ENCODE measurements at regions of chr1 and their contacts with region 1.

Region 1: DNA sequence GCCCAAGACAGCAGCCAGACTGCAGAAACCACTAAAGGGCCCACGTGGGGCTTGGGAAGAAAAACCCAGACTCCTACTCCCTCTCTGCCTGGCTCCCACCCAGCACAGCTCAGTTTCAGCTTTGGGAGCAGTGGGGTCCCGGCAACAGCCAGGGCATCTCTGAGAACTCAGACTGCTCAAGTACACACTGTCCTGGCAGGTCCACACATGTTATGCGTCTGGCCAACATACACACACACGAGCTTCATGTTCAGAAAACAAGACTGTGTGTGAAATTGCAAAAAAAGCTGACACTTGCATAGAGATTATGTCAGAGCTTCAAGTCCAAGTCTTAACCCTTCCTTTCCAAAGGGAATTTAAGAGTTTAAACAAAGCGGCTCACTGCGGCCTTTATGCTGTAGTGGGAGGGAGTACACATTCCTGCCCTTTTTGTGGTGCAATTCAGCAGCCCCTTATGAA is 136.6 kb upstream of the CD34 start:
- DNase-seq: peak; percentile 55 to 87
- H3K4me3 ChIP-seq: no peak overlapping the region
- H3K27ac ChIP-seq: peak overlapping the region; percentile 73 to 79
- H3K4me1 ChIP-seq: peaks cover 7 to 22% of the 10 kb centered on the region in 2 donors
- H3K27me3 ChIP-seq: no peaks in the 10 kb centered on the region
- CTCF ChIP-seq: no peak

Region 2: DNA sequence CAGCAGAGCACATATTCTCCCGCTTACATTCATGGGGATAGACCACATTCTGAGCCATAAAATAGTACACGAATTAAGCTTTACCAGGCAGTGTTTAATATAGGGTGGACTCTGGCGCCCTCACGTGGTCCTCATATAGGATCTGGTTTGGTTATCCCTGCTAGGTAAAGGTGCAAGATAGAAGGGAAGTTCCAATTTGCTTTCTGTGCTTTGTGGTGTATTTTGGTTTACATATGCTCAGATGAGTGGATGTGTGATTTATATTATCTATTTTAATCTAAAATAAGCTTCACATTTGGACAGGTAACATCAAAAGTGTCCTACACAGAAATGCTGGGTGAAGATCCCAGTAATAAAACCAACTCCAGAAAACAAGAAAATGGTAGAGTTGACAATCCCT is 547.9 kb before region 1 on chr1:
- intact Hi-C with region 1: no loop called
- DNase-seq: no peak
- H3K4me3 ChIP-seq: no peak overlapping the region
- H3K27ac ChIP-seq: no peak overlapping the region
- H3K4me1 ChIP-seq: no peaks in the 10 kb centered on the region
- H3K27me3 ChIP-seq: no peaks in the 10 kb centered on the region
- CTCF ChIP-seq: peak; percentile 34 to 54 (median 40)

Region 3: DNA sequence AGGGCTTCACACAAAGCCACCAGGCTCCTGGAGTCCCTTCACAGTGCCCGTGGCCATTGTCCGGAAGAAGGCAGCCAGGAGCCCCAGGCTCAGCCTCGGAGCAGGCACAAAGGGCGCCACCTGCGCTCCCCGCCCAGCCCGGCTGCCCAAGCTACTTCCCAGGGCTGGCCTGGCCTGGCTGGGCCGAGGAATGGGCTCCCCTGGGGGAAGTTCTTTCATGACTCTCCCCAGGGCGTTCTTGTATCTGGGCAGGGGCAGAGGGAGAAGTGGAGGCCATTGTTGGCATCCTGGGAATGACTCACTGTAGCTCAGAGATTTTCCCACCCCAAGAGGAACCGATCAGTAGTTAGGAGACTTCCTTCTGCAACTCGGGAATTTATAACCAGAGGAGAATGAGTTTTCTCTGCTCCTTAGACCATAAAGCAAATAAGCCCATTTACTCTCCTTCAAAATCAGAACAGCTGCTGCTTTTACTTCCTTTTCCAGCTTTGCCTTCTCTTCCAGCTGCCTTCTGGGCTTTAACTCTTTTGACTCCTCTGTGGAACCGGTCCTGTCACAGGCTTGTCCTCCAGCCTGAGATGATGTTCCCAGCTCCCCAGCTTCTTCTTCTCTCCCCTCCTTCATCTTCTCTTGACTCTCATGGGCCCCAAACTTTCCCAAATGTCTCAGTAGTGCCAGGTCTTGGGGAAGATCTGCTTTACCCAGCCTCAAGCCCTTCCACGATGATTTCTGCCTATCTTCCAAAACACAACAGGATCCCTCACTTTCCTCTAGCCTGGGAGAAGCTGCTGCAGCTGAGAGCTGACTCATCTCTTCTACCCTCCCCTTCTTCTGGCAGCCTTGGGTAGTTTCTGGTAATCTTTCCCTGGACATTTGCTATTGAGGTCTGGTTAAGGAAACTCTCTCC is 17.9 kb before region 1 on chr1:
- intact Hi-C with region 1: loop called (anchors 2 kb)
- DNase-seq: peak in 1 of 2 donors; percentile 80
- H3K4me3 ChIP-seq: no peak overlapping the region
- H3K27ac ChIP-seq: peak overlapping the region; percentile 66 to 80
- H3K4me1 ChIP-seq: peaks cover 11 to 40% of the 10 kb centered on the region in 2 donors
- H3K27me3 ChIP-seq: no peaks in the 10 kb centered on the region
- CTCF ChIP-seq: no peak

Measured in ascending aorta (tissue), 2 donors.